Heart right ventricle (tissue), 16 donors: ENCODE measurements at regions of chr10 and their contacts with region 1.

Region 1: GRCh38 chr10:22874189-22874854 is 53.5 kb upstream of the ARMC3 start:
- DNase-seq: no peak
- ATAC-seq: peak in 1 of 8 donors; percentile 42
- H3K4me3 ChIP-seq: no peak overlapping the region
- H3K27ac ChIP-seq: no peak overlapping the region
- H3K4me1 ChIP-seq: no peaks in the 10 kb centered on the region
- H3K27me3 ChIP-seq: no peaks in the 10 kb centered on the region
- CTCF ChIP-seq: no peak

Region 2: GRCh38 chr10:22854935-22855421 is 19.3 kb before region 1 on chr10:
- intact Hi-C with region 1: loop called in 1 of 10 experiments (anchors 2 kb)
- DNase-seq: peak in 1 of 2 donors; percentile 6
- ATAC-seq: peak in 7 of 8 donors; percentile 46 to 98 (median 93)
- H3K4me3 ChIP-seq: no peak overlapping the region
- H3K27ac ChIP-seq: peak overlapping the region in 7 of 10 donors; percentile 25 to 76 (median 68)
- H3K4me1 ChIP-seq: peaks cover 0 to 25% (median 16%) of the 10 kb centered on the region in 9 donors
- H3K27me3 ChIP-seq: no peaks in the 10 kb centered on the region
- CTCF ChIP-seq: peak in 5 of 9 donors; percentile 24 to 47 (median 39)